Heart left ventricle (tissue), 16 donors: ENCODE measurements at regions of chr5 and their contacts with region 1.

Region 1: GRCh38 chr5:172770675-172771438 is at the start of gene DUSP1:
- DNase-seq: peak; percentile 100
- ATAC-seq: peak; percentile 46 to 85 (median 66)
- H3K4me3 ChIP-seq: peak within 1 kb of the TSS; percentile 66 to 98 (median 88)
- H3K27ac ChIP-seq: peak within 1 kb of the TSS; percentile 95 to 100 (median 100)
- H3K4me1 ChIP-seq: peaks cover 1 to 82% (median 25%) of the 10 kb centered on the region in 12 donors
- H3K27me3 ChIP-seq: no peaks in the 10 kb centered on the region
- CTCF ChIP-seq: peak in 10 of 12 donors; percentile 15 to 53 (median 44)
- POLR2A ChIP-seq: peak; percentile 96 to 100
- total RNA-seq, gene DUSP1: 39.9 to 335 (median 78.2) TPM

Region 2: GRCh38 chr5:172795318-172795977 is 24.6 kb after region 1 on chr5:
- intact Hi-C with region 1: loop called in 1 of 10 experiments (anchors 2 kb)
- DNase-seq: peak; percentile 93 to 95 (median 95)
- ATAC-seq: peak; percentile 91 to 96 (median 92)
- H3K4me3 ChIP-seq: no peak overlapping the region
- H3K27ac ChIP-seq: peak overlapping the region; percentile 45 to 88 (median 72)
- H3K4me1 ChIP-seq: peaks cover 0 to 84% (median 21%) of the 10 kb centered on the region in 12 donors
- H3K27me3 ChIP-seq: no peaks in the 10 kb centered on the region
- CTCF ChIP-seq: peak in 2 of 12 donors; percentile 18 to 22
- POLR2A ChIP-seq: peak in 1 of 2 donors; percentile 35

Region 3: GRCh38 chr5:172860520-172861443 is 89.9 kb after region 1 on chr5:
- intact Hi-C with region 1: loop called in 7 of 10 experiments (anchors 2 to 10 kb)
- DNase-seq: peak; percentile 88 to 95 (median 90)
- ATAC-seq: peak; percentile 87 to 93 (median 90)
- H3K4me3 ChIP-seq: peak overlapping the region in 9 of 12 donors; percentile 7 to 26 (median 21)
- H3K27ac ChIP-seq: peak overlapping the region; percentile 87 to 97 (median 94)
- H3K4me1 ChIP-seq: peaks cover 24 to 76% (median 59%) of the 10 kb centered on the region in 12 donors
- H3K27me3 ChIP-seq: no peaks in the 10 kb centered on the region
- CTCF ChIP-seq: no peak
- POLR2A ChIP-seq: peak in 1 of 2 donors; percentile 53

Region 4: GRCh38 chr5:172897481-172898217 is 126.8 kb after region 1 on chr5:
- intact Hi-C with region 1: loop called in 8 of 10 experiments (anchors 2 to 10 kb)
- DNase-seq: peak in 2 of 5 donors; percentile 38 to 52
- ATAC-seq: peak in 3 of 4 donors; percentile 4 to 56 (median 8)
- H3K4me3 ChIP-seq: peak overlapping the region in 6 of 12 donors; percentile 13 to 48 (median 34)
- H3K27ac ChIP-seq: peak overlapping the region; percentile 31 to 92 (median 86)
- H3K4me1 ChIP-seq: peaks cover 2 to 60% (median 53%) of the 10 kb centered on the region in 12 donors
- H3K27me3 ChIP-seq: no peaks in the 10 kb centered on the region
- CTCF ChIP-seq: no peak
- POLR2A ChIP-seq: no peak

Region 5: GRCh38 chr5:172932313-172933017 is 161.6 kb after region 1 on chr5:
- intact Hi-C with region 1: loop called in 8 of 10 experiments (anchors 2 to 5 kb)
- DNase-seq: peak; percentile 76 to 90 (median 78)
- ATAC-seq: peak; percentile 65 to 89 (median 84)
- H3K4me3 ChIP-seq: no peak overlapping the region
- H3K27ac ChIP-seq: peak overlapping the region in 11 of 12 donors; percentile 1 to 80 (median 72)
- H3K4me1 ChIP-seq: peaks cover 0 to 25% (median 18%) of the 10 kb centered on the region in 12 donors
- H3K27me3 ChIP-seq: no peaks in the 10 kb centered on the region
- CTCF ChIP-seq: peak; percentile 91 to 99 (median 96)
- POLR2A ChIP-seq: no peak